Naive thymus-derived CD4-positive, alpha-beta T cell (primary cell): ENCODE measurements at regions of chr9 and their contacts with region 1.

Region 1: GRCh38 chr9:79583952-79584654 is 12.3 kb downstream of the TLE4 start:
- DNase-seq: no peak
- ATAC-seq: peak; percentile 84
- H3K4me3 ChIP-seq: peak overlapping the region; percentile 10
- H3K4me3 Mint-ChIP-seq: peak overlapping the region in 9 of 10 donors; percentile 39 to 76 (median 63)
- H3K27ac ChIP-seq: no peak overlapping the region
- H3K27ac Mint-ChIP-seq: peak overlapping the region in 6 of 9 donors; percentile 1 to 89 (median 26)
- H3K4me1 ChIP-seq: peaks cover 45 to 47% of the 10 kb centered on the region in 2 donors
- H3K4me1 Mint-ChIP-seq: peaks cover 50 to 93% (median 85%) of the 10 kb centered on the region in 7 donors
- H3K27me3 ChIP-seq: no peaks in the 10 kb centered on the region
- H3K27me3 Mint-ChIP-seq: peaks cover 0 to 2% (median 0%) of the 10 kb centered on the region in 5 donors

Region 2: DNA sequence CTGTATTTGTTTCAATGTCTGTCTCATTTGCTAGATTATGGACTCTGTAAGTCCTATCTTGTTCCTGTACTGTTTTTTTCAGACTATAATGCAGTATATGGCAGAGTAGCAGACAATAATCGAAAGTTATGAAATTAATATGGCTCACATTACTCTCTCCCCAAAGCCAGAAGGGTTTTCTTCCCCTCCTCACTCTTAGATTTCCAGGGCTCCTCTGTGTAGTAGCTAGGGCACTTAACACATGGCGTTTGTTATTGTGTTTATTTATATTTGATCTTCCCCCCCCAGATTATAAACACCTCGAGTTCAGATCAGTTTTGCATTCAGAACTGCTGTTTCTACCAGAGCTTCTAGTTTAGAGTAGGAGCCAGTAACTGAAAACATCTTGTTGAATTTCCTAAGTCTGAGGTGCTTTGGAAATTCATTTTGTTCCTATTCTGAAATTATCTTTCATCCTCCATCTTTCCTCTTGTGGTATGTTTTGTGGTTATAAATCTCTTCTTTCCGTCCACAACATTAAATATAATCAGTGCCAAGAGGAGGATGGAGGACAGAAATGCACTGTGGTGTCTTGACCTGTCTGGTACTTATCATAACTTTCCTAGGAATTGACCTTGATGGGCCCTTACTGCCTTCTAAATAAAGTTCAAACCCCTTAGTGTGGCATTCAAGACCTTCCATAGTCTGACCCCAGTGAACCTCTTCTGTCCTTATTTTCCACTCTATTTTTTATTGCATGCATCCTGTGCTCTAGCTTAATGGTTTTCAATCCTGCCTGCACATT is 14.7 kb after region 1 on chr9:
- CTCF ChIA-PET with region 1: interaction called, 3 read pairs
- POLR2A ChIA-PET with region 1: interaction called, 4 read pairs
- intact Hi-C with region 1: loop called in 1 of 2 experiments (anchors 1 kb)
- DNase-seq: no peak
- ATAC-seq: no peak
- H3K4me3 ChIP-seq: no peak overlapping the region
- H3K4me3 Mint-ChIP-seq: peak overlapping the region in 2 of 10 donors; percentile 0 to 22
- H3K27ac ChIP-seq: no peak overlapping the region
- H3K27ac Mint-ChIP-seq: peak overlapping the region in 3 of 9 donors; percentile 16 to 53 (median 43)
- H3K4me1 ChIP-seq: peaks cover 0 to 3% of the 10 kb centered on the region in 2 donors
- H3K4me1 Mint-ChIP-seq: peaks cover 32 to 65% (median 58%) of the 10 kb centered on the region in 7 donors
- H3K27me3 ChIP-seq: no peaks in the 10 kb centered on the region
- H3K27me3 Mint-ChIP-seq: peaks cover 0 to 7% (median 0%) of the 10 kb centered on the region in 5 donors